ENCODE measurements at regions of chr15 and their contacts with region 1.

Region 1: DNA sequence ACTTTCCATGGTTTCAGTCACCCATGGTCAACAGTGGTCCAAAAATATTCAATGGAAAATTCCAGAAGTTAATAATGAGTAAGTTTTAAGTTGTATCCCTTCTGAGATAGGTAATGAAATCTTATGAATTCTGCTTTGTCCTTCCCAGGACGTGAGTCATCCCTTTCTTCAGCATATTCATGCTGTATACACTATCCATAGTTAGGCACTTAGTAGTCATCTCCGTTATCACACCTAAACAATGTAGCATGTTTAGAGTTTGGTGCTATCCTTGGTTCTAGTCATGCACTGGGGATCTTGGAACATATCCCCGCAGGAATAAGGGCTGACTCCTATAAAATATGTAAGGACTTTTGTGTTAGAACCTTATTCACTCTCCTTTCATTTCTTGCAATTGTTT is 153.2 kb downstream of the UNC13C start:
- DNase-seq: no peak
- ATAC-seq: no peak
- H3K4me3 ChIP-seq: no peak overlapping the region
- H3K27ac ChIP-seq: no peak overlapping the region
- H3K4me1 ChIP-seq: no peaks in the 10 kb centered on the region
- H3K27me3 ChIP-seq: no peaks in the 10 kb centered on the region
- CTCF ChIP-seq: no peak
- EP300 ChIP-seq: no peak
- POLR2A ChIP-seq: no peak
- RAD21 ChIP-seq: no peak

Region 2: GRCh38 chr15:54119051-54119450 is 12.4 kb before region 1 on chr15:
- CTCF ChIA-PET with region 1: interaction called, 5 read pairs
- POLR2A ChIA-PET with region 1: interaction called, 3 read pairs
- RAD21 ChIA-PET with region 1: interaction called, 5 read pairs
- SMC1A ChIA-PET with region 1: interaction called, 13 read pairs
- in situ Hi-C with region 1: no loop called
- intact Hi-C with region 1: no loop called
- DNase-seq: no peak
- ATAC-seq: no peak
- H3K4me3 ChIP-seq: no peak overlapping the region
- H3K27ac ChIP-seq: no peak overlapping the region
- H3K4me1 ChIP-seq: no peaks in the 10 kb centered on the region
- H3K27me3 ChIP-seq: no peaks in the 10 kb centered on the region
- CTCF ChIP-seq: no peak
- EP300 ChIP-seq: no peak
- POLR2A ChIP-seq: no peak
- RAD21 ChIP-seq: no peak